ENCODE measurements at regions of chr22 and their contacts with region 1.

Region 1: DNA sequence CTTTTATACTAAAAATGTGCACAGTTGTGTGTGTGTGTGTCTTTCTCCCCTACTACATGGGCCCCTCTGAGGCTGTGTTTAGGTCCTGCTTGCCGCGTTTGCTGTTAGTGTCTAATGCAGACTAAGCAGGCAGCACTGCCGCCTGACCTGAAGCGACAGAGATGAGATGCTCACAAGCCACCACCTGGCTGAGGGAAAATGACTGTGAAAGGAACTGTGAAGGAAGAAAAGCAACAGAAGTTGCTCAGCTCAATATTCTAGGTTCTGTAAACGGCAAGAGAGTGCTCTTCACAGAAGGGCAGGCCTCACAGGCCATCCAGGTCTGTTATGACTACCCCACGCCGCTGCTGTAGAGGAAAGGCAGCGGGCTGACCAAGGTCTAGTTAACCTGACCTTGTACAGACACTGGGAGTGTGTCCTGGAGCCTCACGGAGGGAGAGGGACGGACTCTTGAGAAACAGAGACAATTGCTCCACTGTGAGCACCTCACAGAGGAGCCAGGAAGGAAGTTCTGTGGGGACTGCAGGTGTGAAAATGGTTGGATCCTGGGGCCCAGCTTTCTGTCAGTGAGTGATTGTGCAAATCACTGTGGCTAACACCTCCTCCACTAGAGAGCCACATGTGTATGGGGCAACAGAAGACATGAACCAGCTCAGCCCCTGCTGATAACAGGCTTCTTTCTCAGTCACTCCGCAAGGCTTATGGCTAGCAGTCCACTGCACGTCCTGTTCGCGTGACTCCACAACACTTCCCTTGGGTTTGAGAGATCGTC is 31.3 kb upstream of the YPEL1 start:
- DNase-seq: no peak
- ATAC-seq: peak in 5 of 8 donors; percentile 20 to 34 (median 23)
- H3K4me3 ChIP-seq: no peak overlapping the region
- H3K27ac ChIP-seq: peak overlapping the region in 1 of 10 donors; percentile 72
- H3K4me1 ChIP-seq: peaks cover 0 to 16% (median 0%) of the 10 kb centered on the region in 9 donors
- H3K27me3 ChIP-seq: no peaks in the 10 kb centered on the region
- CTCF ChIP-seq: no peak

Region 2: DNA sequence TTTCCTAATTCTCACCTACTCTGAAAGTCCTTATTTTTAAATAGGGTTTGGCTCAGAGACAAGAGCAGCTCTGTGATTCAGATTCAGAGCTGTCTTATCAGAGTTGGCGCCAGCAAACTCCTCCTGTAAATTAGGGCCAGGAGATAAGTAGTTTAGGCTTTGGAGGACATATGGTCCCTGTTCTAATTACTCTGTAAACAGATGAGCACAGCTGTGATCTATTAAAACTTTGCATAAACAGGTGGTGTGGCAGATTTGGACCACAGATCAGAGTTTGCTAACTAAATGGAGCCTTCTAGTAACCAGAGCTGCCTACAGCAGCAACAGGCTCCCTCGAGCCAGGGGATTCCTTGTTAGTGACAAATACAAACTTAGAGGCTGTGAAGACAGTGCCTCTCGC is 59.2 kb before region 1 on chr22:
- intact Hi-C with region 1: loop called in 2 of 10 experiments (anchors 10 kb)
- DNase-seq: no peak
- ATAC-seq: peak in 4 of 8 donors; percentile 17 to 57 (median 28)
- H3K4me3 ChIP-seq: no peak overlapping the region
- H3K27ac ChIP-seq: no peak overlapping the region
- H3K4me1 ChIP-seq: peaks cover 0 to 14% (median 8%) of the 10 kb centered on the region in 9 donors
- H3K27me3 ChIP-seq: no peaks in the 10 kb centered on the region
- CTCF ChIP-seq: no peak

Region 3: DNA sequence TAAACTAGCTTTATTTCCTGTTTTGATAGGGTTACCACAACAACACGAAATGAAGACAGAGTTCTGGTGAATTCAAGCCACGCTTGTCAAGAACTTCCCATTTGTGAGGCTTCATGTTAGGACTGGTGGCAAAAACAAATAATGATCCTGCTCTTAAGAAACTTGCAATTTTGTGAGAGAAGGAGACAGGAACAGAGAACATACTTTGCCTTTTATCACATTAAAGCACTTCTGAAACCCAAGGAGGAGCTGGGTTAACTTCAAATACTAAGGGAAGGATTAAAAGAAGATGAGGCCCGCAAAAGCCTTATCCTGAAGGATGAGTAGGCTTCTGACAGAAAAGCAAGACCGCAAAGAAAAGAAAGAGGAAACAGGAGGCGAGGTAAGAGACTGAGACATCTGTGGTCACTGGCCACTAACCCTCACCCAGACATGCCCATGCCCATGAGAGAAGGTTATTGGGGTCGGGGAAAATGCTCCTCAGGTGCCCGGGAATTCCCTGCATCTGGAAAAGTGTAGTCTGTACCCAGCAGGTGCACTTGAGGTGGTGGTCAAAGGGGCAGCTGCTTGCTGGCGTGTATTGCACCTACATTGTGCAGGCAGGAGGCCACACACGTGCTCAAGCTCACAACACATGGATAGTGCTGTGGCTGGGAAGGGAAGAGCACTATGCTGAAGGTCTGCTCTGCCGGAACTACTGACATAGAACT is 50.1 kb after region 1 on chr22:
- intact Hi-C with region 1: no loop called
- DNase-seq: peak in 1 of 2 donors; percentile 51
- ATAC-seq: peak; percentile 67 to 93 (median 88)
- H3K4me3 ChIP-seq: peak overlapping the region in 4 of 10 donors; percentile 8 to 23 (median 20)
- H3K27ac ChIP-seq: peak overlapping the region; percentile 2 to 84 (median 70)
- H3K4me1 ChIP-seq: peaks cover 9 to 63% (median 47%) of the 10 kb centered on the region in 9 donors
- H3K27me3 ChIP-seq: no peaks in the 10 kb centered on the region
- CTCF ChIP-seq: no peak

Region 4: DNA sequence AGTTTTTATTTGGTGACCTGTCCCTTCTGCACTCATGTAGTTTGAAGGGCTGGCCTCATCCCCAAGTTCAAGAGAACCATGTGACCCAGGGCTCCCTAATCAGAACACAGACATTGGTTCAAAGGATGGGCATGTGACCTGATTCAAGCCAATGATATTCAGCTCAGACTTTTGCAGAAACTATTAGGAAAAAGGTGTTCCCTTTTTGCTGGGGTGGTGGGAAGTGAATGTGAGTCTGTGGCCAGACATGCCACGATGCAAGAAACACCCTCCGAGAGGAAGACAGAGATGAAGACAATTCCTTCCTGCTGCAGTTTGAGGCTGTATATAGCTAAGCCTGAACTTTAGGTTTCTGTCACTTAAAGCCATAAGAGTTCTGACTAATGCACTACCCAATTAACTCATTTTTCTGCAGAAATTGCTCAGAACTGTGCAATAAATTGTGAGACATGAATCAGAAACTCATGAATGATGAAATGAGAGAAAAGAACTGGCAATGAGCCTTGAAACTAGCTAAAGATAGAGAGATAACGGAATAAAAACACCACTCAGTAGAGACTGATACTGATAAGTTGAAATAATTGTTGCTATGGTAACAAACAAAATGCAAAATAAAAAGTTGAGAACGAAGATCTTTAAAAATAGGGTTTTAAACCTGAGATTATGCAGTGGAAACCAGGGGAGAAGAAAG is 109.8 kb after region 1 on chr22:
- intact Hi-C with region 1: loop called in 1 of 10 experiments (anchors 10 kb)
- DNase-seq: no peak
- ATAC-seq: no peak
- H3K4me3 ChIP-seq: no peak overlapping the region
- H3K27ac ChIP-seq: no peak overlapping the region
- H3K4me1 ChIP-seq: peaks cover 0 to 11% (median 0%) of the 10 kb centered on the region in 9 donors
- H3K27me3 ChIP-seq: no peaks in the 10 kb centered on the region
- CTCF ChIP-seq: no peak

Measured in heart right ventricle (tissue), 16 donors.